ENCODE measurements at regions of chr12 and their contacts with region 1.

Region 1: DNA sequence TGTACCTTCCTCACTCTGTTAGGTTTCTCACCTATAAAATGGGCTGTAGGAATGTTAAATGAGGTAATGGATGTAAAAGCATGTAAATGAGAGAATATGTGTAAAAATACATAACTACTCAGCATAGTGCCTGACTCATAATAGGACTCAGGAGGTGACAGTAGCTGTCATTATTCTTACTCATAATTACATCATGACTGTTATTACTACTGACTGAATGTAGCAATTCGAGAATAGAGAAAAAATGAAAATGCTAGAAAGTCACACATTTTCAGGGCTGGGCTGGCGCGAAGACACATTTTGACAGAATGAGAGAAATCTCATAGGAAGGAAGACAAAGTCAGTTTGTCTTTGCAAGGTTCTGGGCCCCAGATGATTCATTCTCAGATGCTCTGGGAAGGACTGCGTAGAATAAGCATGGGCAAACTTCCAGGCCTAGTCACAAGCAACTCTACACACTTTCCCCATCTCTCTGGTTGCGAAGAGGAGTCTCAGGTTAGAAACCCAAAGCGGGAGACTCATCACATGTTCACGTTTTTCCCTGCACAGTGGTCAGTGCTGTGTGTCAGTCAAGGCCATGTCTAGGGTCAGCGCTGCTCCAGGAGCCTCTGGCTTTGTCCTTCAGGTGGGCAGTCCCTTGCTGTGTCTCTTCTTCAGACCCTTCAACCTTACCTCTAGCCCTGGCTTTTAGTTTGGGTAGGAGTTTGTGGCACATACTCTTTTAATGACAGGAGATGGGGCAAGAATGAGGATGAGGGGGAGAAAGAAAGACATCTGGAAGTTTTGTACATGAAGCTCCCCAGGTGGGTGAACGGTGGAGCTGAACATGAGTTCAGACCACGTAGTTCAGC is 8.4 kb downstream of the GPRC5A start:
- DNase-seq: no peak
- H3K4me3 Mint-ChIP-seq: peak overlapping the region; percentile 95
- H3K27ac Mint-ChIP-seq: peak overlapping the region; percentile 76
- H3K4me1 Mint-ChIP-seq: peaks cover 68% of the 10 kb centered on the region
- H3K27me3 Mint-ChIP-seq: no peaks in the 10 kb centered on the region
- CTCF ChIP-seq: no peak

Region 2: DNA sequence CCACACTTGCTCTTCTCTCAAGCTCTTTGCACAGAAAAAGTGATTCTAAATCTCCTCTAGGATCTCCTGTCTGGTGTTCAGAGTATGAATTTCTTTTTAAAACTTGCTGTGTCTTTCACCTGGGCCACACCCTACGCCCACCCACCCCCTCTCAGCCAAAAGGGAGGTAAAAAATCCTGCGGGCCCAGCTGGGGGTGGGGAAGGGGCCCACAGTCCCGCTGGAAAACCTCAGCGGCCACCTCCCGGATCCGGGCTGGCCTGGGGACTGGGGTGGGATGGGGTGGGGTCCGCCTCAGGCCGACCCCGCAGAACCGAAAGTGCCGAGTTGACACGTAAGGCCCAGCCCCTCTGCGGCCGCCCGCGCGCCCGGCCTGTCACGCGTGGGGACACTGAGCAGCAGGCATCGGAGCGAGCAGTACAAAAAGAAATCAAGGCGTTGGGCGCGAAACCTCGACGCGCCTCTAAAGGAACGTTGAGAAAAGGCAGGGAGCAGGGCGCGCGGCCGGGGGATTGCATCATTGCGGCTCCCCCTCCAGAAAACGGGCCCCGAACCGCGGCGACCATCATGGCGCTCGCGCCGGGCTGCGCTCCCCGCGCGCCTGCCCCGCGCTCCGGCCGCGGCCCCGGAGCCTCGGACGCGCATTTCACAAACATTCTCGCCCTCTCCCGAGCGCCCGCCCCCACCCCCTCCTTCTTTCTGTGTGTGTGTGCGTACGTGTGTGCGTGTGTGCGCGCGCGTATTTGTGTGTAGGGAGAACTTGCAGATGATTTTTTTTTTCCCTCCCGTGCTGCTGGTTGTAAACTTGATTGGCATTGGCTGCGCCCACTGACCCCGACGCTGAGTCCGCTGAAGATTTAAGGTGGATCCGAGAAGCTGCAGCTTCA is 174.9 kb before region 1 on chr12:
- CTCF ChIA-PET with region 1: no interaction called
- intact Hi-C with region 1: loop called (anchors 5 kb)
- DNase-seq: no peak
- H3K4me3 Mint-ChIP-seq: peak overlapping the region; percentile 99
- H3K27ac Mint-ChIP-seq: peak overlapping the region; percentile 98
- H3K4me1 Mint-ChIP-seq: peaks cover 26% of the 10 kb centered on the region
- H3K27me3 Mint-ChIP-seq: no peaks in the 10 kb centered on the region
- CTCF ChIP-seq: no peak

Measured in Calu3 (cell line).